GM10248 (cell line): ENCODE measurements at regions of chr6 and their contacts with region 1.

Region 1: GRCh38 chr6:132813173-132813856 is 1.1 kb upstream of the RPS12 start:
- DNase-seq: peak; percentile 43
- CTCF ChIP-seq: no peak

Region 2: DNA sequence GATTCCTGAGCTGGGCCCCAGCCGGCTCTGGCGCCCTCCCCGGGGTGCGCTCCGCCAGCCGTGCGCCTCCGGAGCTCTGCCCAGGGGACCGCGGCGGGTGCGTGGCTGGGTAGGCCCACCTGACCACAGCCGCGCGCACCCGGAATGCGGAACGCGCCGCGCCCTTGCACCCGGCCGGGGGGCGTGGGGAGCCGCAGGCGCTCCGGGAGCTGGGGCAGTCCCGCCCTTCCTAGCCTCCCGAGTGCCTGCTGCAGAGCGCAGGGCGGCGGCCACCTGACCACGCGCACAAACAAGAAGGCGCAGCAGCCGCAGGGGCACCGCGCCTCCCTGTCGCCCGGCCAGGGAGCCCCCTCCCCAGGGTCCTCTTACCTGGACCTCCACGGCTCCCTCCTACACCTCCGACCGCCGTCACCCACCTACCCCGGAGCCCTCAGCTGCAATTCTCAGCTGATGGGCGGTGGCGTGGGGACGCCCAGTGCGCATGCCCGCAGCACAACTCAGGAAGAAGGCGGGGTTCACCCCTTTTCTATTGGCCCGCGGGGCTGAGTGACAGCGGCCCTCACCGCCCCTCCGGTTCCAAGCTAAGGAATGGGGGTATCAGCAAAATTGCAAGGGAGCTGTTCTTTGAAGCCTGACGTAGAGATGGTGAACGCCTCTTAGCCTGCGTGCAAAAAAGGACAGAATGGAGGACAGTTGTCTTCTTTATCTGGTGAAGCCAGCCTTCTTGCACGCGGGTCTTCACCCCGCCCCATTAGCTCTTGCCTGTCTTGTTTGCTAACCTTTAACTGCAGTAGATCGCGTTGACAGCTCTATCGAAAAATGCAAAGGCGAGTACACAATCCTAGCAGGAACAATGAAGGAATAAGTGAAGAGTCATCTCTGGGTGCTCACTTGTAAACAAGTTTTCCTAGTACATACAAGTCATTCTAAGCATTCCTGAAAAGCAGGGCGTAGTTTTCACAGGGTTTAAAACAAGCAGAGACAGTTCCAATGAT is 300.4 kb before region 1 on chr6 and contains the start of gene STX7:
- CTCF ChIA-PET with region 1: no interaction called
- POLR2A ChIA-PET with region 1: interaction called, 11 read pairs
- DNase-seq: peak; percentile 90
- CTCF ChIP-seq: no peak

Region 3: GRCh38 chr6:132830334-132830751 is 17.0 kb after region 1 on chr6:
- CTCF ChIA-PET with region 1: interaction called, 11 read pairs
- POLR2A ChIA-PET with region 1: interaction called, 12 read pairs
- DNase-seq: no peak
- CTCF ChIP-seq: peak; percentile 37

Region 4: GRCh38 chr6:132937466-132937906 is 124.2 kb after region 1 on chr6:
- CTCF ChIA-PET with region 1: no interaction called
- POLR2A ChIA-PET with region 1: no interaction called
- DNase-seq: peak; percentile 17
- CTCF ChIP-seq: peak; percentile 29